Testis (tissue), 5 donors: ENCODE measurements at regions of chr19 and their contacts with region 1.

Region 1: DNA sequence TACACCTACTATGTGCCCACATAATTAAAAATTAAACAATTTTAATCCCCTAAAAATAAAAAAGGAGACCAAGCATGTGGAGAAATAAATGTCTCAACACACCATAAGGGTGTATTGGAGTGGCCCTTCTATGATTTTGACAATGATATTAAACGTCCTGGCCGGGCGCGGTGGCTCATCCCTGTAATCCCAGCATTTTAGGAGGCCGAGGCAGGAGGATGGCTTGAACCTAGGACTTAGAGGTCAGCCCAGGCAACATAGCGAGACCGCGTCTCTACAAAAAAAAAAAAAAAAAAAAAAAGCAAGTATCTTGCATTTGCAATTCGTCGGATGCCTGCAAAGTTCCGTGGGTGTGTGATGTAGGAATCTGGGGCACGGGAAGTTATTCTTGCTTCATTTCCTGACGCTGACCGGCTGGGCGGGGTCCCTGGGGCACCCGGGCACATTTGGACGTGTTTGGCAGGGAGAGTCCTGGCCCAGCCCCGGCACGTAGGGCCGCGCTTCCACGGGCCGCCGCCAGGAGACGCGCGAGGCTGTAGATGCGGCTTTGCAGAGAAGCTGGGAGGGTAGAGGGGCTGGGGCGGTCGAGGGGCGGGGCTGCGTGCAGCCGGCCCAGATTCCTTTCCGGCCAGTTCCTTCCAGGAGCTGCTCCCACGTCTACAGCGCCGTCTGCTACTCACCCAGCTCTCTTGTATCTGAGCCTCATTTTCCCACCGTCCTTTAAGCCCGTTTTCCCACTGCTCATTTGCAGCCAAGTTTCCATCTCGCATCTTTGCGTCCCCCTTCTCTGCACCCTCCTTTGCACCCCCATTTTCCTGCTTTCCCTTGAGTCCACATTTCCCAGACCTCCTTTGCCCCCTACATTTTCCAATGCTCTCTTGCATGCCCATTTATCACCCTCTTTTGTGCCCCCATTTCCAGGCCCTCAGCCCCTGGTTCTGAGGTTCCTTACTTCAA is 2.2 kb upstream of the TSPAN16 start:
- DNase-seq: peak; percentile 95
- H3K4me3 ChIP-seq: peak overlapping the region; percentile 20 to 39
- H3K27ac ChIP-seq: peak overlapping the region in 1 of 2 donors; percentile 19
- H3K4me1 ChIP-seq: peaks cover 2% of the 10 kb centered on the region
- H3K27me3 ChIP-seq: no peaks in the 10 kb centered on the region
- CTCF ChIP-seq: peak; percentile 92 to 97 (median 96)
- POLR2A ChIP-seq: no peak

Region 2: GRCh38 chr19:11355160-11356073 is 61.7 kb after region 1 on chr19 and contains the start of gene PLPPR2:
- intact Hi-C with region 1: no loop called
- DNase-seq: peak; percentile 95
- H3K4me3 ChIP-seq: peak within 1 kb of the TSS; percentile 79 to 80
- H3K27ac ChIP-seq: peak within 1 kb of the TSS; percentile 59 to 72
- H3K4me1 ChIP-seq: peaks cover 7% of the 10 kb centered on the region
- H3K27me3 ChIP-seq: no peaks in the 10 kb centered on the region
- CTCF ChIP-seq: no peak
- POLR2A ChIP-seq: no peak
- total RNA-seq, gene PLPPR2: 27.1 to 28.9 TPM

Region 3: GRCh38 chr19:11374433-11375142 is 80.9 kb after region 1 on chr19 and contains the start of gene SWSAP1:
- intact Hi-C with region 1: loop called (anchors 10 kb)
- DNase-seq: peak; percentile 99
- H3K4me3 ChIP-seq: peak within 1 kb of the TSS; percentile 72 to 73
- H3K27ac ChIP-seq: peak within 1 kb of the TSS; percentile 94 to 97
- H3K4me1 ChIP-seq: peaks cover 15% of the 10 kb centered on the region
- H3K27me3 ChIP-seq: no peaks in the 10 kb centered on the region
- CTCF ChIP-seq: no peak
- POLR2A ChIP-seq: no peak
- total RNA-seq, gene SWSAP1: 6.5 to 7.0 TPM

Region 4: DNA sequence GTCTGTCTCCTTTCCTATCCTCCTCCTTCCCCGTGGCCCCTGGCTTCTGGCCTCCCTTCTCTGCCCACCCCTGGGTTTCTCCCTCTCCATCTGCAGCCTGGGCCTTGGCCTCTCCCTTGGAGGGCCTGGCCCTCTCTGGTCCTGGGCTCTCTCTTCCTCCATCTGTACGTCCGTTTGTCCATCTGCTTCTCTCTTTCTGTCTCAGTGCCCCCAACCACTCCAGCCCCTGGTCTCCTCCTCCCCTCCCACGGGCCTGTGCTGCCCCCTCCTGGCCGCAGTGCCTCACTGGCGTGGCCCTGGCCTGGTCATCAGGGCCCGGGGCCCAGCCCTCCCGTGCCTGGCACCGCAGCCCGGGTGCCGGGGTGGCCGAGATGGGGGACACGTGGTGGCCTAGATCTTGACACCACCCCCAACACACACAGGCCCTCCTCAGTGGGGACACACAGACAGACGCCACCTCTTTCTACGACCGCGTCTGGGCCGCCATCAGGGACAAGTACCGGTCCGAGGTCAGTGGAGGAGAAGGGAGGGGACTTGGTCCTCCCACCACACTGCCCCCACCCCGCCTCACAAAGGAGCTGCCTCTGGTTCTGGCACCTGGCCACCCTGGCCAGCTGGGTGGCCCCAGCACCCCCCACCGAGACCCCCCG is 153.1 kb after region 1 on chr19:
- intact Hi-C with region 1: loop called (anchors 10 kb)
- DNase-seq: no peak
- H3K4me3 ChIP-seq: no peak overlapping the region
- H3K27ac ChIP-seq: no peak overlapping the region
- H3K4me1 ChIP-seq: no peaks in the 10 kb centered on the region
- H3K27me3 ChIP-seq: no peaks in the 10 kb centered on the region
- CTCF ChIP-seq: peak; percentile 60 to 68 (median 63)
- POLR2A ChIP-seq: no peak